Activated T-helper 1 cell treated with anti-CD3 and anti-CD28 coated beads, Interleukin-12 subunit alpha, Interleukin-12 subunit beta, Interleukin-2, Interleukin-4 antibody, amounts not matched to agents 30 ng/mL and 10 ng/mL and 1 ng/mL, durations not matched to agents 14 hours and 24 hours and 36 hours (primary cell): ENCODE measurements at regions of chr6 and their contacts with region 1.

Region 1: DNA sequence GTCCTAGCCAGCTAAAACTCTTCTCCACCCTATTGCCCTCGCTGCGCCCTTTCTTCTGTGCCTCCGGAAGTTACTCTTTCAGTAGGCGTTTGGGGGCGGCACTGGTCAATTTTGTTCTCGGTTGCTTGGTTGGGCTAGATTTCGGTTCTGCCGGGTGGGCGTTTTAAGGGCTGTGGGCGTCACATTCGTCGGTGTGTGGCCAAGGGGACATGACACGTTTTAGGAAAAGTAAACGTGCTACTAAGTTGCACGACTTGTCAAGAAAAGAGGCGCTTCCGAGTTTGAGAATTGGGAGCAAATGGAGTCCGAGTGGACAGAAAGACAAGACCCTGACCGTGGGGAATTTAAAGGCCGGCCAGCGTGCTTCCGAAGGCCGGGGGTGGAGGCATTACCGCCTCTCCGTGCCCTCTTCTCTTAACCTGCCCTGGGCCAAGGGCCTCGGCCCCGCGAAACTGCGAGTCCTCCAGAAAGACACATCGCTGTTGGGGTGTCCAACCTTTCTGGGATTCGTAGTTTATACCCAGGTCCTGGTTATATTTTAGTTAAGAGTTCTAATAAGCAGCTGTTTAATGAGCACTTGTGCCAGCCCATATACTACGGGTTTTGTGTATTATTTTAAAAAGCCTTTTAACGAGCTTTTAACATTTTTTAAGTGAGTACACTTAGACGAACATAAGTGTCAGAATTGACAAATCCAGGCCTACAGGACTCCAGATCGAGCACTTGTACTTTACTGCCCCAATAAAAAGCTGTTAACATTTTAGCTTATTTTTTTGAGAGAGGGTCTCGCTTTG is 661 bp upstream of the BAG6 start:
- DNase-seq: peak; percentile 81
- H3K4me3 Mint-ChIP-seq: peak overlapping the region; percentile 93
- H3K27ac Mint-ChIP-seq: peak overlapping the region; percentile 100
- H3K4me1 Mint-ChIP-seq: peaks cover 48% of the 10 kb centered on the region
- H3K27me3 Mint-ChIP-seq: no peaks in the 10 kb centered on the region

Region 2: DNA sequence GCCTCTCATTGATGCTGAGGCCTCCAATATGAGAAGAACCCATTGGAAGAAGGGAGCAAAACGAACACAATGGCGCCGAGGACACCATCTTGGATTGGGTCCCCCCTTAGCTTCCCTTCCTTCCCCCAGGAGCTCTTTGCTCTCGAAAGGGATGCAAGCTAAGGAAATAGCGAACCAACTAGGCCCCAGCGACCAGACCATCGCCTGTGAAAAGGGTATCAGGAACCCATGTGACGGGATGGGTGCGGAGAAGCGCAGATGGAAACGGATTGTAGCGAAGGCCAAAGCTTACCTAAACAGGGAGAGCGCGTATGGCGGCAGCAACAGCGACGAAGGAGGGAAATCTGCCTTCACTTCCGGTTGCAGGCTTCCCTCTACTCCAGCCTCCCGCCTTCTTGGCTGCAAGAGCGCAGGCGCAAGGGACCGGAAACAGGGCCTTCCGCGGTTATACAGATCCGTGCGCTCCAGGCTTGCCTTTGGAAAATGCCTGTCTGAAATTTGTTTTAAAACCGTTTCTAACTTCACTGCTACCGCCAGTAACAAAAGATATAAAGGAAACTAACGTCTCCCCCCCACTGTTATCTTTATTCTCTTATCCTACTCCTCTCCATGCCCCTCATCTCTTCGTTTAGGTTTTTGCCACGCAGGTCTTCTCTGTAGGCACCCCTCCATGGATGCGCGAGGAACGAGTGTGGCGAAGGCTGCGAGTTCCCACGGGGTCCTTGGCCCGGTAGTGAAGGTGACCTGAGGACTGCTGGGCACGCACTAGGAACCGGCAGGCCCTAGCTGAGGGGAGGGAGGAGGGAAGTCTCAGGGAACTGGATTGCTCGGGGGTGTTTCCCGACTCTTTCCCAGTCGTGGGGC is 111.2 kb before region 1 on chr6 and contains the start of gene DDX39B:
- intact Hi-C with region 1: loop called (anchors 1 kb)
- DNase-seq: peak; percentile 92
- H3K4me3 Mint-ChIP-seq: peak within 1 kb of the TSS; percentile 100
- H3K27ac Mint-ChIP-seq: peak within 1 kb of the TSS; percentile 97
- H3K4me1 Mint-ChIP-seq: peaks cover 41% of the 10 kb centered on the region
- H3K27me3 Mint-ChIP-seq: peaks cover 3% of the 10 kb centered on the region
- total RNA-seq, gene DDX39B: 628 and 637 TPM in 2 replicates

Region 3: DNA sequence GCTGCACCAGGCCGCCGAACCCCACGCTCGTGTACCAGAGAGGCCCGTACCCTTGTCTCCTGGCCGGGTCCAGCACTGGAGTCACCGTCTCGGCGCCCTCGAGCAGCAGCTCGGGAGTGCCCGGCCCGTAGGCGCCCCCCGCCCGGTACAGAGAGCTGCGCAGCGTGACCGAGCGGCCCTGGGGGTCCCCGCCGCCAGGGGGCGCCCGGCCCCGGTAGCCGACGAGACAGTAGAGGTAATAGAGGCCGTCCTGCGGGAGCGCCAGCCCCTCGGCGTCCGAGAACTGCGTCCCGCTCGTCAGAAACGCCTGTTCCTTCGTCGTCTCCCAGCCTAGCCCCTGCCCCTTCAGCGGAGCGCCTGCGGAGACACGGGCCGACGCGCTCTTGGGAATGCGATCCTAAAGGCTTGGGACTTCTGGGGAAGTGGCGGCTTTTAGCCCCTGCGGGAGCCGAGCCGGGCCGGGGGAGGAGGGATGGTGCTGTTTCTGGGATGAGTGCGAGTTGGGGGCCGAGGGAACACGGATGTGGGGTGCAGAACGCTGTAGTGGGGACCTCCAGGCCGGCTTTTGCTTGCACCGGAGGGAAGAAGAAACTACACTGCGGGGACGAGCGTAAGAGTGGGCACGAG is 72.2 kb before region 1 on chr6:
- intact Hi-C with region 1: loop called (anchors 2 kb)
- DNase-seq: peak; percentile 81
- H3K4me3 Mint-ChIP-seq: peak overlapping the region; percentile 92
- H3K27ac Mint-ChIP-seq: peak overlapping the region; percentile 93
- H3K4me1 Mint-ChIP-seq: peaks cover 63% of the 10 kb centered on the region
- H3K27me3 Mint-ChIP-seq: no peaks in the 10 kb centered on the region

Region 4: DNA sequence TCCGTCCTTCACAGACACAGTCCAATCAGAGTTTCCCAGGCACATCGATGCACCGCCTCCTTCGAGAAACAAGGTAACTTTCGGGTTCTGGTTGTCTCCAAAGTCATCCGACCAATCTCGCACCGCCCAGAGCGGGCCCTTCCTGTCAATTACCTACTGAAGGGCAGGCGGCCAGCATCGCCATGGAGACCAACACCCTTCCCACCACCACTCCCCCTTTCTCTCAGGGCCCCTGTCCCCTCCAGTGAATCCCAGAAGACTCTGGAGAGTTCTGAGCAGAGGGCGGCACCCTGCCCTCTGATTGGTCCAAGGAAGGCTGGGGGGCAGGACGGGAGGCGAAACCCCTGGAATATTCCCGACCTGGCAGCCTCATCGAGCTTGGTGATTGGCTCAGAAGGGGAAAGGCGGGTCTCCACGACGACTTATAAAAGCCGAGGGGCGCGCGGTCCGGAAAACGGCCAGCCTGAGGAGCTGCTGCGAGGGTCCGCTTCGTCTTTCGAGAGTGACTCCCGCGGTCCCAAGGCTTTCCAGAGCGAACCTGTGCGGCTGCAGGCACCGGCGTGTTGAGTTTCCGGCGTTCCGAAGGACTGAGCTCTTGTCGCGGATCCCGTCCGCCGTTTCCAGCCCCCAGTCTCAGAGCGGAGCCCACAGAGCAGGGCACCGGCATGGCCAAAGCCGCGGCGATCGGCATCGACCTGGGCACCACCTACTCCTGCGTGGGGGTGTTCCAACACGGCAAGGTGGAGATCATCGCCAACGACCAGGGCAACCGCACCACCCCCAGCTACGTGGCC is 174.4 kb after region 1 on chr6 and contains the start of gene HSPA1B:
- intact Hi-C with region 1: loop called (anchors 1 kb)
- DNase-seq: peak; percentile 95
- H3K4me3 Mint-ChIP-seq: peak within 1 kb of the TSS; percentile 83
- H3K27ac Mint-ChIP-seq: peak within 1 kb of the TSS; percentile 93
- H3K4me1 Mint-ChIP-seq: peaks cover 41% of the 10 kb centered on the region
- H3K27me3 Mint-ChIP-seq: no peaks in the 10 kb centered on the region
- total RNA-seq, gene HSPA1B: 152 and 155 TPM in 2 replicates

Region 5: DNA sequence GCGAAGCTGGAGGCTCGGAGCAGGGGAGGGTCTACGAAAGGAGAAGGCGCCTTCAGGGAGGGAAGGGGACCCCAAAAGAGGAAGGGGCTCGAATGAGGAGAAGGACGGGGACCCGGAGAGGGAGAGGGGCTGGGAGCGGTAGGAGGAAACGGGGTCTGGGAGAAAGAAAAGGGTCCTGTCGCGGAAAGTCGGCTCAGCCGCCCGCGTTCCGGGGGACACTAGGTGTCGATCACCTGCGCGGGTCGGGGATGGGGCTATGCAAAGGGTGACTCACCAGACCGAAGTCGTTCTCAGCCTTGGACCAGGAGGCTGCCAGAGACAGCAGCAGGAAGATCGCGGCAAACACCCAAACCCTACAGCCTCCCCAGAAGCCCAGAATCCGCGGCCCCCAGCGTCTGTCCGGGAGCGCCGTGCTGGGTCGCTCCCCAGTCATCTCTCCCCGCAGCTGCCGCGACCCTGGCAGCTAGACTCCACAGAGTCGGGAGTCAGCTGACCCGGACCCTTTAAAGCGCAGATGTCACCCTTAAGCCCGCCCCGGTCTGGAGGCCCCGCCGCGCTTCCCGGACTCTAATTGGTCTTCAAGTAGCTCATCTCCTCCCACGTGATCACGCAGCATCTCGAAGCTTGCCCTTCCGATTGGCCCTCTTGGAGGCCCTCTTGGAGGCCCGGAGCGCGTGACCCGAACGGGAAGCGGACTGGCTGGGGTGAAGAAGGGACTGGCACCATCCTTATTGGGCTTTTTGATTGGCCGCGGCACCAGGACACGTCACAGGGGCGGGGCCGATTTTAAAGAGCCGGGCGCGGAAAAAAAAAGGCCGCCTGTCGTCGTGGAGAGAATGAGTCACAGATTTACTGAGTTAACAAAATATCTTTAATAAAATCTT is 209.5 kb after region 1 on chr6 and contains the start of gene NEU1:
- intact Hi-C with region 1: loop called (anchors 1 kb)
- DNase-seq: peak; percentile 99
- H3K4me3 Mint-ChIP-seq: peak within 1 kb of the TSS; percentile 97
- H3K27ac Mint-ChIP-seq: peak within 1 kb of the TSS; percentile 94
- H3K4me1 Mint-ChIP-seq: peaks cover 37% of the 10 kb centered on the region
- H3K27me3 Mint-ChIP-seq: peaks cover 3% of the 10 kb centered on the region
- total RNA-seq, gene NEU1: 22.1 and 24.3 TPM in 2 replicates

Region 6: DNA sequence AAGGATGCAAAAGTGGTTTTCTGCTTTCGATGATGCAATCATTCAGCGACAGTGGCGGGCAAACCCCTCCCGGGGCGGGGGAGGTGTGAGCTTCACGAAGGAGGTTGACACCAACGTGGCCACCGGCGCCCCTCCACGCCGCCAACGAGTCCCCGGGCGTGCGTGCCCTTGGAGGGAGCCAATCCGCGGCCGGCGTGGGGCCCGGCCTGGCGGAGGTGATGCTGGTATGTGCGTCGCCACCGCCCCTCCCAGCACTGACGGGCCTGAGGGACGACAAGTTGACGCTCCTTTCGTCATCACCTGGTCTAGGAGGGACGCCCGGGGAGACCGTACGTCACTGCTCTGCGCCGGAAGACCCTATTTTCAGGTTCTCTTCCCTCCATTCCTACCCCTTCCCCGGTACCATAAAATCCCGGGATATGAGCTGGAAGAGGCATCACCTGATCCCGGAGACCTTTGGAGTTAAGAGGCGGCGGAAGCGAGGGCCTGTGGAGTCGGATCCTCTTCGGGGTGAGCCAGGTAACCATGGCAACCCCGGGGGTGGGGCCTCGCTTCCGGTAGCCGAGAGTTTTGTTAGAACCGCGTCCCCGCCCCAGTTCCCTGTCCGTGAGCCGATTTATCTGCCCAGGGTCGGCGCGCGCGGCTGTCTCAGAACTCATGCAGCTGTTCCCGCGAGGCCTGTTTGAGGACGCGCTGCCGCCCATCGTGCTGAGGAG is 319.0 kb after region 1 on chr6 and contains the start of gene DXO:
- intact Hi-C with region 1: loop called (anchors 1 kb)
- DNase-seq: peak; percentile 97
- H3K4me3 Mint-ChIP-seq: peak within 1 kb of the TSS; percentile 80
- H3K27ac Mint-ChIP-seq: peak within 1 kb of the TSS; percentile 100
- H3K4me1 Mint-ChIP-seq: peaks cover 34% of the 10 kb centered on the region
- H3K27me3 Mint-ChIP-seq: no peaks in the 10 kb centered on the region
- total RNA-seq, gene DXO: 14.1 and 15.2 TPM in 2 replicates

Region 7: GRCh38 chr6:32843979-32844838 is 1191.1 kb after region 1 on chr6 and contains the start of gene PSMB8:
- intact Hi-C with region 1: loop called (anchors 5 kb)
- DNase-seq: peak; percentile 96
- H3K4me3 Mint-ChIP-seq: peak within 1 kb of the TSS; percentile 93
- H3K27ac Mint-ChIP-seq: peak within 1 kb of the TSS; percentile 98
- H3K4me1 Mint-ChIP-seq: peaks cover 82% of the 10 kb centered on the region
- H3K27me3 Mint-ChIP-seq: no peaks in the 10 kb centered on the region
- total RNA-seq, gene PSMB8: 353 and 358 TPM in 2 replicates